ENCODE measurements at regions of chr11 and their contacts with region 1.

Region 1: DNA sequence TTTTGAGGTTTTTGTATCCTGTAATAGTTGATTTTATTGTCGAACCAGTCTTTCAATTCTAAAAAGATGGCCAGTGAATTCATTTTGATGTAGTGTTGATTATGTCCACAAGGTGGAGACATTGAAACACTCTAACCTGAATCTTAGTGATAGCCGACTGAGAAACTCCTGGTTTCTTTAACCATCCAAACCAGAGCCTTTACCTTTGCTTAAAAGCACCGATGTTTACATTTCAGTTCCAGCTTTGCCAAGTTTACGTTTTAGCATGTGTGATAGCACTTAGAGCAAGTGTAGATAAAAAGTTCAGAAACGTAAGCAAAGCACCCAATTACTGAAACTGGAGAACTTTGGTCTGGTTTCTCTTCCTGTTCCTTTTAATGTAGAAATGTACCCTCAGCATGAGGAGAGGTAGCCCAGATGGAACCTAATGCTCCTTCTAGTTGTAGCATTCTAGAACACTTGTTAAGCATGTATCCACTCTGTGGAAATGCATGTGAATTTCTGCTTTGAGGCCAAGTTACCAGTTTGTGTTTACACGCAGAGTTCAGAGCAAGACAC is 208.6 kb downstream of the DBX1 start:
- DNase-seq: no peak
- H3K4me3 Mint-ChIP-seq: peak overlapping the region; percentile 6
- H3K27ac Mint-ChIP-seq: no peak overlapping the region
- H3K4me1 Mint-ChIP-seq: peaks cover 8% of the 10 kb centered on the region
- H3K27me3 Mint-ChIP-seq: peaks cover 25% of the 10 kb centered on the region

Region 2: DNA sequence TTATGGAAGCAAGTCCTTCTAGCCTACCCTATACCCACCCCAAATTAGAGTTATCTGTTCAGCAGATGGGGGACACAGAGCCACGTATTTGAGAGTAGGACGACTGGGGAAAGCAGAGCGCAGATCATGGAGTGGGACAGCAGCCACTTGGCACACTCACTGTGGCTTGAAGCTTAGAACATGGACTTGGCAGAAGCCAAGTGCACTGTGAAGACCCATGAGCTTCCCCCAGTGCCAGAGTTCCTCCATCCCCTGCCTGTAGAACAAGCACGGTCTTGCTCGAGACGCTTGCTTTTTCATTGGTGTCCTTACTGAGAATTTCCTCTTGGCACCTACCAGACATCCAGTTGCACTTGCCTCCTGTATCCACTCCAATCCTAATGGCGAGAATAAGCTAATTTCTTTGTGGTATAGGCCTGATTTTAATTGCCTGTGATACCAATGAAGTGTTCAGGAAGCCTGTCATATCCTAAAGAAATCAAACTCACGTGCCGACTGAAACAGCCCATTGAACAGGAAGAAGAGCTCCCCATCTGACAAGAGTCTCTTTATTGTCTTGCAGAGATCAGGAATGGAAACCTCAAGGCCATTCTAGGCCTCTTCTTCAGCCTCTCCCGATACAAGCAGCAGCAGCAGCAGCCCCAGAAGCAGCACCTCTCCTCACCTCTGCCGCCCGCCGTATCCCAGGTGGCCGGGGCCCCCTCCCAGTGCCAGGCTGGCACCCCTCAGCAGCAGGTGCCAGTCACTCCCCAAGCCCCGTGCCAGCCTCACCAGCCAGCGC is 72.1 kb before region 1 on chr11:
- CTCF ChIA-PET with region 1: no interaction called
- POLR2A ChIA-PET with region 1: no interaction called
- DNase-seq: no peak
- H3K4me3 Mint-ChIP-seq: no peak overlapping the region
- H3K27ac Mint-ChIP-seq: no peak overlapping the region
- H3K4me1 Mint-ChIP-seq: no peaks in the 10 kb centered on the region
- H3K27me3 Mint-ChIP-seq: peaks cover 3% of the 10 kb centered on the region

Region 3: DNA sequence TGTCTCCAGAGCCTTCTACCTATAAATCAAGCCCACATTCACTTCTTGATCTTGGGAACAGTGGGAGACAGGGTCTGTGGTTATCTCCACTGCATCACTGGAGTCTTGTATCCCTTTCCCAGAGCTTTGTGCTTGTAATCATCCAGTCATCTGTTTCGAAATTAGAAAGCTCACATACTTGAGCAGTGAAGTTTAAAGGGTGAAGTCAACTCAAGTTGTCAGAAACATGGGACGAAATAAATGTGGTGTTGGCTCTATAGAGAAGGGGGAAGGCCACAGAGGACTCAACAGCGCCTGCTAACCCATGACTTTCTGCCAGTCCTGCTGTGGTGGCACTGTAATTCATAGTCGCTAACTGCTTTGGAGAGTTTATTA is 11.2 kb after region 1 on chr11:
- CTCF ChIA-PET with region 1: interaction called, 18 read pairs
- POLR2A ChIA-PET with region 1: no interaction called
- DNase-seq: no peak
- H3K4me3 Mint-ChIP-seq: no peak overlapping the region
- H3K27ac Mint-ChIP-seq: no peak overlapping the region
- H3K4me1 Mint-ChIP-seq: peaks cover 16% of the 10 kb centered on the region
- H3K27me3 Mint-ChIP-seq: peaks cover 36% of the 10 kb centered on the region

Region 4: DNA sequence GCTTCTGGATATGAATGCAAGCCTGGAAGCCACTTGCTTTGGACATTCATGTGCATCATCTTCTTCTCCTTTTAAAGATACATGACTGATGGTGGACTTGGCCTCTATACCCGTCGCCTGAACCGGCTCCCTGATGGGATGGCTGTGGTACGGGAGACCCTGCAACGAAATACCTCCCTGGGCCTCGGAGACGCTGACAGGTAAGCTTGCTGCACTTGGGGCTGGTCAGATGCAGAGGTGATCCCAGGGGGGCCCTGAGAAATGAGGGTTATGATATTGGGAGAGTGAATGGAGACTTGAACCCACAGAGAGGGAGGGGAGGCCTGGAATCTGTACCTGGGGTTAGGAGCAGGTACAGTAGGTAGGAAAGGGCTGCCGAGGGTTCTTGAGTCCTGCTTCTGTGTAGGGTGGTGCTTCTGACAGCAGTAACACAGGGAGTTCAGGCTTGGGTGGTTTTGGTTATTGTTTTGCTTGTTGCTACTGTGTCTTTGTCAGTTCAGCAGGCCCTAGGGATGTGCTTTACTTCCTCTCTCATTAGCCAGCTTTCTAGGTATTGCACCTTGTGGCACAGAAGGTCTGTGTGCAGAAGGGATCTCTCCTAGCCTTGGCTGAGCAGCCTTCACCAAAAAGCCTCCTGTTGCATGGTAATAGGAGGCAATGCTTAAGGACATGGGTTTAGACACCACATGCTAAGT is 32.6 kb after region 1 on chr11:
- CTCF ChIA-PET with region 1: no interaction called
- POLR2A ChIA-PET with region 1: no interaction called
- DNase-seq: no peak
- H3K4me3 Mint-ChIP-seq: no peak overlapping the region
- H3K27ac Mint-ChIP-seq: no peak overlapping the region
- H3K4me1 Mint-ChIP-seq: peaks cover 3% of the 10 kb centered on the region
- H3K27me3 Mint-ChIP-seq: peaks cover 9% of the 10 kb centered on the region

Region 5: DNA sequence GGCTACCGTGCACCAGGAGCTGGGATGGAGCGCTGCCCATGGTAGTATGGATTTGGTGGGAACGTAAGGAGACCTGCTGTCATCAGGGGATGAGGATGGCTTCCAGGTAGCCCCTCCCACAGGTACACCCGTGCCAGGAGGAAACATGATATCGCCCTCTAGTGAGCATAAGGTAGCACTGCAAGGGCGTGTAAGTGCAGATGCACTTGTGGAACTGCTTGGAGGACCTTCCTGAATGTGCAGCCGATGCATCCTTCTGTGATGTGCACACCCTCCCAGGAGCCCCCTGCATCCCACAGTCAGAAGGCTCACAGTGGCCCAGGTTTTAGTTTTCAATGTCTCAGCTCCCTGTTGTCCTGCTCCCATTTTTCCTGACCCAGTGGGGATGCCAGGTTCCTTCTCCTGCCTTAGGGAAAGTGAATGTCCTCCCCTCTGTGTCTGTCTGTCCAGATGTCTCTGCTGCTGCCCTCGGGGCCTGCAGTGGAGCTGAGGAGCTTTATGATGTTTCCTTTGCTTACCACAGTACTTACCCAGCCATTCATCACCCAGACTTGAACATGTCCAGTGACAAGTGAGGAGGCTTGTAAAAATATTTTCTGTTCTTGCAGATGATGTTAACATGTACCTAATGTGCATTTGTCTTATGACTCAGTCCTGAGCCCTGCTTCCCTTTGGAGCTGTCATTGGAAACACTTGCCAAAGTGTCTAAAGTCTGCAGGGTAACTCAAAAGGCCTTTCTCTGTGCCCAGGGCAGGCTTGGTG is 159.5 kb after region 1 on chr11:
- CTCF ChIA-PET with region 1: interaction called, 21 read pairs
- POLR2A ChIA-PET with region 1: no interaction called
- DNase-seq: peak; percentile 54
- H3K4me3 Mint-ChIP-seq: no peak overlapping the region
- H3K27ac Mint-ChIP-seq: no peak overlapping the region
- H3K4me1 Mint-ChIP-seq: peaks cover 2% of the 10 kb centered on the region
- H3K27me3 Mint-ChIP-seq: no peaks in the 10 kb centered on the region

Measured in activated CD4-positive, alpha-beta memory T cell treated with anti-CD3 and anti-CD28 coated beads, Interleukin-2, amount 10 ng/mL, durations not matched to agents 7 days and 5 days (primary cell).